Ascending aorta (tissue), 2 donors: ENCODE measurements at regions of chr19 and their contacts with region 1.

Region 1: DNA sequence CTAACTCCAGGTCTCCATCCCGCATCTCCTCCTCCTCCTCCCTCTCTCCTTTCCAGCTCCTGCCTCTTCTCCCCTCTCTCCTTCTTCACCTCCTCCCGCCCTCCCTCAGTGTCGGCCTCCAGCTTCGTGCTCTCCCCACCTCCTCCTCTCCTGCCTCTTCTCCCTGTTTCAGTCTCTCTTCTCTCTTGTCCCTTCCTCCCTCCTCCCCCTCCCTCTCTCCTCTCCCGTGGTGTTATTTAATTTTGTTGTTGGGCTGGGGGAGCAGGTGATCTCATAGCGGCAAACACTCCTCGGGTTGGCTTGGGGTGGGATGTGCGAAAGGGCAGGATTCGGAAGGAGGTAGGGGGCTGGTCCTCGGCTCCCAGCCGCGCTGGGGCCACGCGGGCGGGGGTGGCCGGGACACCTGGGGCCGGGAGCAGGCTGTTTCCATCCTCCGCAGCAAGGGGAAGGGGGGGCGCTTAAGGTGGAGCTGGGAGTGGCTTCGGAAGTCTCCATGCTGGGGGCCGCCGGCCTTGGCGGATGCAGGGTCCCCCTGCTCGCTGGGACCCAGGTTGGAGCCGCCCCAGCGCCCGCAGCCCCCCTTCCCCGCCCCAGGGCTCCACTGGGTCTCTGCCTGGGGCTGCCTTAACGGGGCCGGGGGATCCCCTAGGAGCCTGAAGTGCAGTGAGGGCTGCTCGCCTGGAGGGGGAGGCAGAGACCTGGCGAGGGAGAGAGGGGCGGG is at the start of gene CA11:
- DNase-seq: peak; percentile 58 to 94
- H3K4me3 ChIP-seq: peak within 1 kb of the TSS; percentile 55 to 76
- H3K27ac ChIP-seq: peak within 1 kb of the TSS; percentile 82 to 95
- H3K4me1 ChIP-seq: peaks cover 0 to 21% of the 10 kb centered on the region in 2 donors
- H3K27me3 ChIP-seq: no peaks in the 10 kb centered on the region
- CTCF ChIP-seq: peak; percentile 91 to 98 (median 96)
- total RNA-seq, gene CA11: not detected

Region 2: DNA sequence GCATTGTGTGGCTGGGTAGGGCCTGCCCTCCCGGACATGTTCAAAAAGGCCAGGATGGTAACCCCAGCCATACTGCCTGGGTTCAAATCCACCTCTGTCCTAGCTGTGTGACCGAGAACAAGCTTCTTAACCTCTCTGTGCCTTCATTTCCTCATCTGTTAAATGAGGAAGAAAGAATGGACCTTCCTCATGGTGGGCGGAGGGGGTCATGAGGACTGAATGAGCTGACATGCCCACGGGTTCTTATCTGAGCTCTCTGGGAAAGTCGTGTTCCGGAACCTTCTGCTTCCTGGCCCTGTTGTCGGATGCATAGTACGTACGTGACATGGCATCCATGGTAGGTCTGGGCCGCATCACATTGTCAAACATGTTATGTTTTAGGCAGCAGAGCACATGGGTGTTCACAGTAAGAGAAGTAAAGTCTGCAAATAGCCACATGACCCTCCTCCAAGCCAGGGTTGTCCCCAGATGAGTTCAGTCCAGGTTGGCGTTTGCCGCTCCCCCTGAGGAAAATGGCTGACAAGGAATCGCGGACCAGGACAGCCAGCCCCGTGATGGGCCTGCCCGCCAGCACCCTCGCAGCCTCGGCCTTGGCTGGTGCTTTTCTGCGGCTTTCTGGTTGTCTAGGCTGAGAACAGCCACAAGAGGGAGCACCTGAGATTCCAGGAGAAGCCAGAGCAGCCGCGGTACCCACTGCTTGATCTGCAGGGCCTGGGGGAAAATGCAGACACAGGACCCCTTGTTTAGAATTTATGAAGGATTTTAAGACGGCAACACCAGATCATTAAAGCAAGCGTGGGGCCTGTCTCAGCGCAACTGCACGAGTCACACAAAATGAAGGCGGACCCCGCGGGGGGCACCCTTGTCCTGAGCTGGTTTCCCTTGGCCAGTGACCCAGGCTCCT is 29.0 kb after region 1 on chr19:
- intact Hi-C with region 1: loop called (anchors 1 kb)
- DNase-seq: peak; percentile 20 to 90
- H3K4me3 ChIP-seq: no peak overlapping the region
- H3K27ac ChIP-seq: no peak overlapping the region
- H3K4me1 ChIP-seq: peaks cover 0 to 2% of the 10 kb centered on the region in 2 donors
- H3K27me3 ChIP-seq: no peaks in the 10 kb centered on the region
- CTCF ChIP-seq: peak; percentile 84 to 89 (median 86)

Region 3: DNA sequence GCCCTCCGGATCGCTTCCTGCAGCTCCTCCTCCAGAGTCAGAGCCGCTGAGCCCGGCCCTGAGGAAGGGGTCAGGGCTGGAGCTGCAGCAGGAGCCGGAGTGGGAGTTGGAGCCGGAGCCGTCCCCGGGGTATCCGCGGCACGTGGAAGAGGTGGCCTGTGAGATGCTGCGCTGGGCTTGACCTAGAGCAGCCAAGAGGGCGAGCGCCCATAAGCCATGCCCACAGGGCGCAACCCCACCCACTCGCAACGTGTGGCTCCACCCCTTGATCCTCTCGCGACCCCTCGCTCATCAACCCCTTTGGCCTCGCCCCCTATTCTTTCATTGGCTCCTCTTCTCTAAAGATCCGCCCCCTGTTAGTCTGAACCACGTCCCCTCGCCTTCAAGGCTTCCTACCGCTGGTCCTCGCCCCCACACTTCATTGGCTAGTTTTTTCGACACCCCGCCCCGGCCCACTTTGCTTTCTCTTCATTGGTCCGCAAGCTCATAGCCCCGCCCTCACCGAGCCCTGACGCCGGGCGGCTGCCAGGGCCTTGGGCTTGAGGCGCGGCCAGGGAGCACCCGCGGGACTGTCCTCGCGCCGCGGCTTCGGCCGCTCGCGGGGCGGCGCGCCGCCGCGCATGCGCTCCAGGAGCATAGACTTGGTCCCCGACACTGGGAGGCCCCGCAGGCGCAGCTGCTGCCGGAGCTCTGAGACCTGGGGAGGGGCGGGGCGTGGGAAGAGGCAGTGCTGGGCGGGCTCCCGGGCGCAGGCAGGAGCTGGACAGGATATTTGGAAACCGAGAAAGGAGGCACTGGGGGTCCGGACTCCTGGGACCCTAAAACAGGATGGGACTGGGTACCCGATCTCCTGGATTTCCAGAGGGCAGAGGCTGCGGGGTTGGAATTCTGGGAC is 68.0 kb after region 1 on chr19:
- intact Hi-C with region 1: loop called (anchors 1 kb)
- DNase-seq: peak; percentile 97 to 99
- H3K4me3 ChIP-seq: peak overlapping the region; percentile 64 to 75
- H3K27ac ChIP-seq: peak overlapping the region; percentile 69 to 79
- H3K4me1 ChIP-seq: peaks cover 12 to 18% of the 10 kb centered on the region in 2 donors
- H3K27me3 ChIP-seq: no peaks in the 10 kb centered on the region
- CTCF ChIP-seq: no peak

Region 4: GRCh38 chr19:48738557-48739399 is 92.6 kb after region 1 on chr19:
- intact Hi-C with region 1: loop called (anchors 5 kb)
- DNase-seq: peak; percentile 53 to 91
- H3K4me3 ChIP-seq: peak overlapping the region; percentile 55 to 77
- H3K27ac ChIP-seq: peak overlapping the region in 1 of 2 donors; percentile 24
- H3K4me1 ChIP-seq: peaks cover 5 to 9% of the 10 kb centered on the region in 2 donors
- H3K27me3 ChIP-seq: no peaks in the 10 kb centered on the region
- CTCF ChIP-seq: peak in 2 of 3 experiments; percentile 11 to 62

Region 5: DNA sequence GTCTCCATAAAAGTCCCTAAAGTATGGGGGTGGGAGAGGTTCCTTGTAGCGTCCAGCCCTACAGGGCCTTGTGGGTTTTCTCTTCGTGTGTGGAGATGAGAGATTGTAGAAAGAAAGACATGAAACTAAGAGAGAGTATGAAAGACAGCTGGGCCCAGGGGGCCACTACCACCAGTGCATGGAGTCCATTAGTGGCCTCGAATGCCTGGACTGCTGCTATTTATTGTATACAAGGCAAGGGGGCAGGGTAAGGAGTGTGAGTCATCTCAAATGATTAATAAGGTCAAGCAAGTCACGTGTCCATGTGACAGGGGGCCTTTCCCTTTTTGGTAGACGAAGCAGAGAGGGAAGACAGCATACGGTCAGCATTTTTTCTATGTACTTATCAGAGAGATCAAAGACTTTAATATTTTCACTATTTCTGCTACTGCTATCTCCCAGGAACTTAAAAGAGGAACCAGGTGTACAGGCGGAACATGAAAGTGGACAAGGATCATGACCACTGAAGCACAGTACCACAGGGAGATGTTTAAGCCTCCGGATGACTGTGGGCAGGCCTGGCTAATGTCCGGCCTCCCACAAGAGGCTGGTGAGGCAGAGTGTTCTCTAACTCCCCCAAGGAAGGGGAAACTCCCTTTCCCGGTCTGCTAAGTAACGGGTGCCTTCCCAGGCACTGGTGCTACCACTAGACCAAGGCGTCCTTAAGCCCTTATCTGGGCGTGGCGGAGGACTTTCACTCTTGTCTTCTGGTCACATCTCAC is 134.7 kb after region 1 on chr19:
- intact Hi-C with region 1: loop called (anchors 10 kb)
- DNase-seq: no peak
- H3K4me3 ChIP-seq: no peak overlapping the region
- H3K27ac ChIP-seq: no peak overlapping the region
- H3K4me1 ChIP-seq: no peaks in the 10 kb centered on the region
- H3K27me3 ChIP-seq: no peaks in the 10 kb centered on the region
- CTCF ChIP-seq: no peak

Region 6: DNA sequence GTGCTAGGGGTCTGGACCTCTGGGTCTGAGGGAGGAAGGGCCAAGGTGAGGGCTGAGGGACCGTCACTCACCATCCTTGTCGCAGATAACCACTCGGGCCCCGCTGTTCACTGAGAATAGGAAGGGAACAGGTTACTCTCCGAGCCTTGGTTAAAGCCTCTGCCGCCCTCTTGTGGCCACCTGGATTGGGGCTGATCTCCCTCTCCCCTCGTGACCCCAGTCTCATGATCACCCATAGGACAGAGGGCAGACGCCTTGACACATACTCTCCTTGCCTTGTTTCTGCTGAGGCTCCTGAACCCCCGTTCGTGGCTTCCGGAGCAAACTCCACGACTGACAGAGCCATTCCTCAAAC is 189.6 kb after region 1 on chr19:
- intact Hi-C with region 1: loop called (anchors 2 kb)
- DNase-seq: peak; percentile 89 to 98
- H3K4me3 ChIP-seq: peak overlapping the region; percentile 59 to 67
- H3K27ac ChIP-seq: peak overlapping the region; percentile 88 to 94
- H3K4me1 ChIP-seq: peaks cover 3 to 8% of the 10 kb centered on the region in 2 donors
- H3K27me3 ChIP-seq: no peaks in the 10 kb centered on the region
- CTCF ChIP-seq: peak; percentile 82 to 96 (median 85)